ENCODE measurements at regions of chr3 and their contacts with region 1.

Region 1: DNA sequence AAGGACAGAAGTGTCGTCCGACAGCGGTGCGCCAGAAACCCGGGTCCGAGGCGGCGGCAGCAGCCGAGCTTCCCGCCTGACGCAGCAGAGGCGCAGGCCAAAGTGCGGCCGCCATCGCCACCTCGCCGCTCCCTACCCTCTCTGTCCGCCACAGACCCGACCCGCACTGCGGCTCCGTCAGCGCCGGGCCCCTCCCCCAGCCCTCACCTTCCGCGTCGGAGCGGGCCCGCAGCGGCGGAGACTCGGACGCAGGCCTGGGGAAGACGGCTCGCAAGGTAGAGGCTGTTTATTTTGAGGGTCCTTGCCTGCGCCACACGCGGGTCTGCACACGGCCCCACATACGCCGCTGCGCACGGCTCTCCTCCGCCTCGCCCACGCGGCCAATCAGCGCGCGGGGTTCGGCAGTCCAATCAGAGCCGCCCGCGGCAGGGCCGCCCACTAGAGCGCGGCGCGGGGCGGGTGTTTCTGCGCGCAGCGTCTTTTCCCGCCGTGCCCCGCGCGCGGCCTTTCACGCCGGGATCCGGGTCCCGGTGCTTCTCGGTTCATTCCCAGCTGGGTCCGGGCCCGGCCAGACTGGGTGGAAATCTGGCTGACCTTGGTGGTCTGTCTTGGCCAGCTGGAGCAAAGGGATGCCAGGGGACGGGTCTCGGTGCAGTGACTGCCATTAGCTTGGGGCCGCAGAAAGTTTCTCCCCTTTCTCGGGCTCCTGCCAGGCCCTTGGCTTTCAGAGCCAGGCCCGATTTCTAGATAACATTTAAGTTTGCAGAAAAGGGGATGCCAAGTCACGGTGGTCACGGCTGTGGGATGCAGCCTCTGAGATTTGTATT is at the start of gene CNBP:
- DNase-seq: peak; percentile 91
- H3K4me3 Mint-ChIP-seq: peak within 1 kb of the TSS; percentile 87
- H3K27ac Mint-ChIP-seq: peak within 1 kb of the TSS; percentile 99
- H3K4me1 Mint-ChIP-seq: peaks cover 46% of the 10 kb centered on the region
- H3K27me3 Mint-ChIP-seq: no peaks in the 10 kb centered on the region
- total RNA-seq, gene CNBP: 263 to 270 TPM

Region 2: GRCh38 chr3:129195731-129196256 is 12.0 kb after region 1 on chr3:
- CTCF ChIA-PET with region 1: interaction called, 10 read pairs
- POLR2A ChIA-PET with region 1: no interaction called
- DNase-seq: no peak
- H3K4me3 Mint-ChIP-seq: no peak overlapping the region
- H3K27ac Mint-ChIP-seq: no peak overlapping the region
- H3K4me1 Mint-ChIP-seq: peaks cover 19% of the 10 kb centered on the region
- H3K27me3 Mint-ChIP-seq: no peaks in the 10 kb centered on the region

Region 3: GRCh38 chr3:129409541-129409940 is 225.8 kb after region 1 on chr3:
- CTCF ChIA-PET with region 1: no interaction called
- POLR2A ChIA-PET with region 1: no interaction called
- DNase-seq: no peak
- H3K4me3 Mint-ChIP-seq: no peak overlapping the region
- H3K27ac Mint-ChIP-seq: no peak overlapping the region
- H3K4me1 Mint-ChIP-seq: no peaks in the 10 kb centered on the region
- H3K27me3 Mint-ChIP-seq: no peaks in the 10 kb centered on the region

Region 4: GRCh38 chr3:129735638-129736037 is 551.9 kb after region 1 on chr3:
- CTCF ChIA-PET with region 1: no interaction called
- POLR2A ChIA-PET with region 1: no interaction called
- DNase-seq: no peak
- H3K4me3 Mint-ChIP-seq: no peak overlapping the region
- H3K27ac Mint-ChIP-seq: no peak overlapping the region
- H3K4me1 Mint-ChIP-seq: no peaks in the 10 kb centered on the region
- H3K27me3 Mint-ChIP-seq: no peaks in the 10 kb centered on the region